K562 (cell line): ENCODE measurements at regions of chr17 and their contacts with region 1.

Region 1: DNA sequence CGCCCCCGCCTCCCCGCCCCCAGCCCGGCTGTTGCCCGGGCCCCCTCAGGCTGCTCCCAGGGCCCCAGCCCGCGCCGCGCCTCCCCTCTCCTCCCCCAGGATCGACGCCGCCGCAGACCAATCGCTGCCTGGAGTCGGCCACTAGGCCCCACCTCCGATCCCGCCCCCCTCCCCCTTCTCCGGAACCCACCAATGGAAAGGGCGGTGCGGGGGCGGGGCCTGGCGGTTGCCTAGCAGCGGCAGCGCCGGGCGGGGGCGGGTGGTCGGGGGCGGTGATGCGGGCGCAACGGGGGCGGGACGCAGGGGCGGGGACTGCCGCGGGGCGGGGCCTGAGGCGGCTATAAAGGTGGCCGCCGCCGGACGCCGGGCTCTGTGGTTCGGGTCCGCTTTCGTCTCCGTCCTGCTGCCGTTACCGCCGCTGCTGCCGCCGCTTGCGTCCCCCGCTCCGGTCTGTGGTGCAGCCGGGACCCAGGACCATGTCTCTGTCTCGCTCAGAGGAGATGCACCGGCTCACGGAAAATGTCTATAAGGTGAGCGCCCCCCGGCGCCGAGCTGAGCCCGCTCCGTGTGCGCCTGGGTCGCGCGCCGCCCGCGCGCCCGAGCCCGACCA is at the start of gene BAIAP2:
- DNase-seq: peak; percentile 96 to 100 (median 98)
- ATAC-seq: peak; percentile 95
- H3K4me3 ChIP-seq: peak within 1 kb of the TSS; percentile 70
- H3K27ac ChIP-seq: peak within 1 kb of the TSS; percentile 54; the same call in 2 of the 3 replicates
- H3K4me1 ChIP-seq: peaks cover 16 to 76% of the 10 kb centered on the region in 2 experiments
- H3K27me3 ChIP-seq: no peaks in the 10 kb centered on the region
- CTCF ChIP-seq: peak; percentile 16 to 42 (median 39); a peak in 3 of 6 replicates
- EP300 ChIP-seq: no peak
- POLR2A ChIP-seq: peak; percentile 96
- RAD21 ChIP-seq: peak in 1 of 2 experiments; percentile 24; a peak in 1 of 4 replicates
- polyA plus RNA-seq, gene BAIAP2: 2.3 to 2.4 TPM

Region 2: DNA sequence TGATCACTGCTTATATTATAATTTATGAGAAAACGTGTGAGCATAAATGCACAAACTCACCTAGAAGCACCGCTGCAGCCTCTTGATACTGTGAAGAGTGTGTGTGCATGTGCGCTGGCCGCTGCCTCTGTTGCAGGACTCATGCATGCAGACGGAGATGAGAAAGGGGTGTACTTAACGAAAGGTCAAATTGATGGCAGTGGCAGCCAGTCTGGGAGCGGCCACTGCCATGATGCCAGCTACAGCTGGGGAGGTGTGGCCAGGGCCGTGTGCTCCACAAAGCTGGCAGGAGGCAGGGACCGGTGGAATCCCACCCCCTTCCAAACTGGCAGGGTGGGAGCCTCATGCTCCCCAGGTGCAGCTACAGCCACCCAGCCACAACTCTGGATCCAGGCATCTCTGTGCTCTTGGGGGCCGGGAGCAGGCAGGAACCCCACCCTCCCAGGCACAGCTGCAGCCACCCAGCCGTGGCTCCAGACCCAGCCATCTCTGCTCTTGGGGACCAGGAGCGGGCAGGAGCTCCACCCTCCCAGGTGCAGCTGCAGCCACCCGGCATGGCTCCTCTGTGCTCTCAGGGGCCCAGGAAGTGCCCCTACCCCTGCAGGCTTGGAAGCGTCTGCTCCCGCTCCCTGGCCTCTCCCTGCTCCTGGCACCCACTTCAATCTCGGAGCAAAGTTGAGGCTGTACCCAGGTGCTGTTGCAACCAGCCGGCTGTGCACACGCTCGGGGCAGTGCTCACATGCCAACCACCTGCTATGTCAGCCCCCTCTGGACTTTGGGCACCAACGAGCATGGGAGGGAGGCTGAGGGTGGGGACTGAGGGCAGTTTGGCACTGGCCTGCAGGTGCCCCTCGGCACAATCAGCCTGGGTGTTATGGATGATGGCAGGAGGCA is 120.7 kb before region 1 on chr17:
- CTCF ChIA-PET with region 1: no interaction called
- POLR2A ChIA-PET with region 1: no interaction called
- in situ Hi-C with region 1: no loop called
- intact Hi-C with region 1: no loop called
- DNase-seq: no peak
- ATAC-seq: no peak
- H3K4me3 ChIP-seq: no peak overlapping the region
- H3K27ac ChIP-seq: no peak overlapping the region
- H3K4me1 ChIP-seq: no peaks in the 10 kb centered on the region
- H3K27me3 ChIP-seq: no peaks in the 10 kb centered on the region
- CTCF ChIP-seq: no peak
- EP300 ChIP-seq: no peak
- POLR2A ChIP-seq: no peak
- RAD21 ChIP-seq: no peak

Region 3: DNA sequence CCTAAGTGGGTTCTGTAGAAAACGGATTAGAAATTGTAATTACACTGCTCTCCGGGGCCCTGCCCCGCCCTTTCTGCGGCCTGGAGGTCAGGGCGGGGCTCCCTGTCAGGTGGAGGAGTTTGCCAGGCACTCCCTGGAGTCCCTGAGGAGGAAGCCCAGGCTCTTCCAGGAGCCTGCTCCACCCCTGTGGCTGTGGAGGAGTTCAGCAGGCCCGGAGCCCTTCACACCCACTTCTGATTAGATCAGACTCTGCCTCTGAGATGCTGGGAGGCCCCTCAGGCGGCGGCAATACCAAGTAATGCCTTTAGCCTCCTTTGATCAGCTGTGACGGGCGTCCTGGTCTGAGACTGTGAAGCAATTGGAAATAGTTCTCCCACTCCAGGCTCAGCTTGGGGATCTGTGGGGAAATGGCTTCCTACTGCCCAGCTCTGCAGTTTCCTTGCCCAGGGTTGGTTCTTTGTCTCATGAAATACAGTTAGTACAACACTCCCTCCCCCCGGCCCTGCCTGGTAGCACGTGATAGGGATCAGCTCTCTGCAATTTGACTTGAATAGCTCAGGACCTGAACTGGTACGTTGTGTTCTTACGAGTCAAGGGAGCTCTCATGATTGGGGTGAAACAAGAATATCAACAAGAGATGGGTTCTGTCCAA is 22.3 kb after region 1 on chr17:
- CTCF ChIA-PET with region 1: no interaction called
- POLR2A ChIA-PET with region 1: interaction called, 3 read pairs
- in situ Hi-C with region 1: no loop called
- intact Hi-C with region 1: loop called (anchors 2 kb)
- DNase-seq: peak; percentile 90 to 95 (median 92)
- ATAC-seq: peak; percentile 98
- H3K4me3 ChIP-seq: no peak overlapping the region
- H3K27ac ChIP-seq: peak overlapping the region; percentile 9; the same call in 2 of the 3 replicates
- H3K4me1 ChIP-seq: peaks cover 17 to 63% of the 10 kb centered on the region in 2 experiments
- H3K27me3 ChIP-seq: no peaks in the 10 kb centered on the region
- CTCF ChIP-seq: peak in 2 of 3 experiments; percentile 3 to 28; a peak in 3 of 6 replicates
- EP300 ChIP-seq: peak; percentile 40; the same call in 1 of the 2 replicates
- POLR2A ChIP-seq: no peak
- RAD21 ChIP-seq: peak; percentile 20 to 49; a peak in 3 of 4 replicates